Heart left ventricle (tissue), 16 donors: ENCODE measurements at regions of chr1 and their contacts with region 1.

Region 1: DNA sequence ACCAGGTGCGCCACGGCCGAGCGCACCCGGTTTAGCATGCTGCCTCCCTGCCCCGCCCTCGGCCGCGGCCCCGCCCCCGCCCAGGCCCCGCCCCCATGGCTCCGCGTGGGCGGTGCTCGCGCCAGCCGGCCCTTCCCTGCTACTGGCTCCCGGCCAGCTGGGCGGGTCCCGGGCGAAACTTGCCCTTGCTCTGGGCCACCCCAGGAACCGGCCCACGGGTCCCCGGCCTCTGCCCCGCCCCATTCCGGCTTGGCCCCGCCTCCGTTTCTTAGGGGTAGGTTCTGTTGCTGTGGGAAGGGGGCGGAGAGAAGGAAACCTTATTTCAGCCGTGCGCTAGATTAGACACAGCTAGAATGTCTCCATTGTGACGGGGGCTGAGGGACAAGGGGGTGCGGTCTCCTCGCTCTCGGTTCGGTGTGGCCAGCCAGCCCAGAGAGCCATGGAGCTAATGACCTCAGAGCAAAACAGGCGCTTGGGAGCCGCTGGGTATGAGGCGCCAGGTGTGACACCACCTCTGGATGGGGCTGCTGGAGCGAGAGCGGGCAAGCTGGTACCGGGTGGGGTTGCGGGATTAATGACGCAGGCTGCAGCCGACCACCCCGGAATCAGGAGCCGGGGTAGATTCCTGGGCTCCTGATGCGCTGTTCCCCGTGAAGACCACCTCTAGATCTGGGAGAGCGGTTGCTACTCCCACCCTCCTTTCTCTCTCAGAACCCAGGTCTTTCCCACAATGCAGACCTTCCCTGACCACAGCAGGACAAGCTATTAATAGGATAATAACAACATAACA is at the start of gene PPM1J:
- DNase-seq: peak; percentile 98 to 99 (median 99)
- ATAC-seq: peak; percentile 86 to 93 (median 88)
- H3K4me3 ChIP-seq: peak within 1 kb of the TSS; percentile 40 to 93 (median 70)
- H3K27ac ChIP-seq: peak within 1 kb of the TSS in 11 of 12 donors; percentile 31 to 83 (median 71)
- H3K4me1 ChIP-seq: peaks cover 0 to 35% (median 20%) of the 10 kb centered on the region in 12 donors
- H3K27me3 ChIP-seq: peaks cover 0 to 12% (median 0%) of the 10 kb centered on the region in 9 donors
- CTCF ChIP-seq: no peak
- POLR2A ChIP-seq: peak in 1 of 2 donors; percentile 81
- total RNA-seq, gene PPM1J: 4.2 to 11.5 (median 8.3) TPM

Region 2: DNA sequence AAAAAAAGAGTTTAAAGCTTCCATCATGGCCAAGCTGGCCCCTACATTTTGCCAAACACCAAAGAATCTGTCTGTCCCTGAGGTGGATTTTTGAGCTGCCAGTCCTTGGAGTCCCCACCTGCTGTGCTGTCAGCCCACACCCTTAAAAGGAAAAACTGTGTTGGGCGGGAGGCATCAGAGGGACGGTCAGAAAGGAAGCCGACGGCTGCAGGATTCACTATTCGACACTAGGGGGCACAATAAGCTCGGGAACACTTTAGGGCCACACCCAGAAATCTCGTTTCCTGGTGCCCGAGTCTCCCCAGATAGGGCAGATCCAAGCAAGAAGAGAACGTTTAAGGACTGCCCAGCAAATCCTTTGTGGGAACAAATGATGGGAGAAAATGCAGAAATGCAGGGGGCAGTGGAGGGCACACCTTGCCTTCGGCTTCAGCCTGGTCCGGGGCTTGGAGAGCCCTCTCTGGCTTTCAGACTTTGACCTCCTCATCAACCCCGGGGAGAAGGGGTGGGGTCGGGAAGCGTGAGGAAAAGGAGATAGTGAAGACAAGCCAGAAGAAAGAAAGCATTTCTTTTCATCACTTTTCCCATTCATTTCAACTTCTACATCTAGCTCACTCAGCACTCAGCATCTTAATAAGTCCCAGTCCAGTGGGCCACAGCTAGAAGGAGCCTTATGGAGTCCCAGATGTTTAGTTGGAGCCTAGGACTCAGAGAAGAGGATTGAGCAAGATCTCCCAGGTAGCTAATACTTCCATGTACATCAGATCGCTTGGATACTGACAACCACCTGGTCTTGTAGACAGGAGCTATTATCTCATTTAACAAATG is 324.5 kb before region 1 on chr1:
- intact Hi-C with region 1: loop called in 1 of 10 experiments (anchors 5 kb)
- DNase-seq: peak; percentile 86 to 90 (median 89)
- ATAC-seq: peak; percentile 68 to 83 (median 80)
- H3K4me3 ChIP-seq: peak overlapping the region in 11 of 12 donors; percentile 1 to 59 (median 51)
- H3K27ac ChIP-seq: peak overlapping the region; percentile 57 to 96 (median 91)
- H3K4me1 ChIP-seq: peaks cover 0 to 68% (median 29%) of the 10 kb centered on the region in 12 donors
- H3K27me3 ChIP-seq: no peaks in the 10 kb centered on the region
- CTCF ChIP-seq: peak; percentile 86 to 97 (median 94)
- POLR2A ChIP-seq: peak in 1 of 2 donors; percentile 47

Region 3: DNA sequence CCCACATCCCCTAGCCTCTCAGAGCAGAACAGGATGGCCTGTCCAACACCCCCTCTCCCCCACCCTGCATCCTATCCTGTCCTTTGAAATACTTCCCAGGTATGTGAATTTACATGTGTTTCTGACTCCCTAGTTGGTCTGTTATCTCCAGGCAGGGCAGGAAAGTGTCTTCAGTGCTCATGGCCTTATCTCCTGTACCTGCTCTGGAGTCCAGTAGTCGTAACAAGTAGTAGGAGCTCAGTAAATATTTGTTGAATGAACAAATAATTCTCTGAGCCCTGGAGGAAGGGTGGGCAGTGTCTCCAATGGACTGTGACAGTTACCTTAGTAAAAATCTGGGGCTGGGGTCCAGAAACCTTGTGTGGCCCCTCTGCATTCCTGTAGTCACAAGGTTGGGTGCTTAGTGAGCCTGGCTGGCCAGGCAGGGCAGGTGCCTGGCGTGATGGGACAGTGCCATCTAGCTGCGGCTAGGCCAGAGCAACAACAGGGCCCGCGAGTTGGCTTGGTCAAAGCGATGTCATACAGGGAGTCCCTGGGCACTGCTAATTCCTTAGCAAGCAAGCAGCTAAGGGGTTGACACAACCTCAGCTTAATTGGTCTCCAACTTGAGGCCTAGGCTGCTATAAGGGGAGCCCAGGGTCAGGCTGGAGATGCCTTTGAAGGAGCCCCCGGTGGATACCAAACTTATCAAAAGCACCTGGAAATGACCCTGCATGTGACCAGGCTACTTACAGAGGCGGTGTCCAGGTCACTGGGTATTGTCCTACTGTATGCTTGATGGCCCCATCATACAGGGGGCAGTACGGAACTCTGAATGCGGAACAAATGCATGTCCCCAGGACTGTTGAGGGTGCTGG is 88.7 kb after region 1 on chr1:
- intact Hi-C with region 1: loop called (anchors 1 to 2 kb)
- DNase-seq: peak; percentile 60 to 77 (median 65)
- ATAC-seq: peak; percentile 72 to 89 (median 86)
- H3K4me3 ChIP-seq: no peak overlapping the region
- H3K27ac ChIP-seq: no peak overlapping the region
- H3K4me1 ChIP-seq: peaks cover 0 to 8% (median 2%) of the 10 kb centered on the region in 12 donors
- H3K27me3 ChIP-seq: no peaks in the 10 kb centered on the region
- CTCF ChIP-seq: peak; percentile 46 to 78 (median 68)
- POLR2A ChIP-seq: no peak

Region 4: DNA sequence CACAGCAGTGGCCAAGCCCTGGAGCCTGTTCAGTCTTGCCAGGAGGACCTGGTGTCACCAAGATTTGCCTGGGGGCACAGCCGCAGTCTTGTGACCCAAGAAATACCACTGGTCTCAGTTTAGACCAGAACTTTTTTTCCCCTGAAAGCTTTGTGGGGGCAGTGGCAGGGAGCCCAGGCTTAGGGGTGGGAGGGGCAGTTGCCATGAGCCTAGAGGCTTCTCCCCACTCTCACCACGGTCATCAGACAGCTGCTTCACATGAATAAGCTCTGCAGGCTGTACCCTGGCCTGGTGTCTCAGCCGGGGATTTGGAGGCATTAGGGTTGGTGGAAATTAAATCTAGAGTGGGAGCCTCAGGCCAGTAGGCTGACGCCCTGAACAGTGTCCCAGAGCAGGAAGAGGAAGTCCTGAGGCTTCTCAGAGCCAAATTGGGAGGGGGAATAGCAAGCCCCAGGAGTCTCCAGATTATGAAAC is 166.8 kb after region 1 on chr1:
- intact Hi-C with region 1: loop called in 4 of 10 experiments (anchors 2 to 10 kb)
- DNase-seq: peak in 3 of 5 donors; percentile 24 to 36 (median 26)
- ATAC-seq: peak; percentile 39 to 59 (median 46)
- H3K4me3 ChIP-seq: no peak overlapping the region
- H3K27ac ChIP-seq: peak overlapping the region in 9 of 12 donors; percentile 41 to 79 (median 59)
- H3K4me1 ChIP-seq: peaks cover 0 to 18% (median 11%) of the 10 kb centered on the region in 12 donors
- H3K27me3 ChIP-seq: no peaks in the 10 kb centered on the region
- CTCF ChIP-seq: no peak
- POLR2A ChIP-seq: no peak

Region 5: DNA sequence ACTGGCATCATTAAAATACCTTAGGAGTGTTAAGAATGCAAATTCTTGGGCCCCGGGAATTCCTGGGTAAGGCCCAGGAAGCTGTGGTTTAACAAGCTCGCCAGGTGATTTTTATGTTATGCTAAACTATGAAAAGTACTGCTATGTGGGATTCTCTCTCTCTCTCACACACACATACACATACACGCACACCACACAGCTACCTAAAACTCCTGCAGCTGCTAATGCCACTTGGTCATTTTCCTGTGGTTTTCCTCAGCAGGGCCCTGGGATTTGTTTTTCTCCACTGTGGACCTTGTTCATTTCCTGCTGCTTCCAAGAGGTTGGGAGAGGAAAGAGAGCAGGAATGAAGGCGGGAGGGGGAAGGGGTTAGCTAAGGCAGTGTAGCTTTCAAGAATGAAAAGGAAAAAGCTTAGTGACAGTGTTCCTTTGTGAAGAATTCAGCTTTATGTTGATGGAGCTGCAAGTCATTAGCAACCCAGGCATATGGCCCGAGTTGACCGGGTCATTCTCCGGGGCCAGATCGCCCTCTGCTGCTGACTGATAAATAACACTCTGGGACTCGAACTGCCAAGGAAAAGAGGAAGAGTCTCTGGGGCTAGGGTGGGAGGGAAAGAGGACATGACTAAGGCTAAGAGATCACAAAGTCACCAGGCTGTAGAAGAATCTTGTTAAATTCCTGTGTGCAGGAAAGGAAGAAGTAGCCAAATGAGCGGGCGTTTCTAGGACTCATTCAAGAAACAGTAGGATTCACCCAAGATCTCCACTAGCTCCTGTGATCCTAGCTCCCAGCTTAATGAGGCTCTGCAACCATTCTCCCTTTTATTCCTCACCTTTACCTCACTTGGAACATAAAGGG is 327.1 kb after region 1 on chr1:
- intact Hi-C with region 1: loop called in 8 of 10 experiments (anchors 1 to 5 kb)
- DNase-seq: peak; percentile 67 to 82 (median 74)
- ATAC-seq: peak; percentile 86 to 92 (median 92)
- H3K4me3 ChIP-seq: no peak overlapping the region
- H3K27ac ChIP-seq: peak overlapping the region in 1 of 12 donors; percentile 73
- H3K4me1 ChIP-seq: peaks cover 0 to 32% (median 9%) of the 10 kb centered on the region in 12 donors
- H3K27me3 ChIP-seq: no peaks in the 10 kb centered on the region
- CTCF ChIP-seq: peak; percentile 40 to 74 (median 66)
- POLR2A ChIP-seq: no peak

Region 6: DNA sequence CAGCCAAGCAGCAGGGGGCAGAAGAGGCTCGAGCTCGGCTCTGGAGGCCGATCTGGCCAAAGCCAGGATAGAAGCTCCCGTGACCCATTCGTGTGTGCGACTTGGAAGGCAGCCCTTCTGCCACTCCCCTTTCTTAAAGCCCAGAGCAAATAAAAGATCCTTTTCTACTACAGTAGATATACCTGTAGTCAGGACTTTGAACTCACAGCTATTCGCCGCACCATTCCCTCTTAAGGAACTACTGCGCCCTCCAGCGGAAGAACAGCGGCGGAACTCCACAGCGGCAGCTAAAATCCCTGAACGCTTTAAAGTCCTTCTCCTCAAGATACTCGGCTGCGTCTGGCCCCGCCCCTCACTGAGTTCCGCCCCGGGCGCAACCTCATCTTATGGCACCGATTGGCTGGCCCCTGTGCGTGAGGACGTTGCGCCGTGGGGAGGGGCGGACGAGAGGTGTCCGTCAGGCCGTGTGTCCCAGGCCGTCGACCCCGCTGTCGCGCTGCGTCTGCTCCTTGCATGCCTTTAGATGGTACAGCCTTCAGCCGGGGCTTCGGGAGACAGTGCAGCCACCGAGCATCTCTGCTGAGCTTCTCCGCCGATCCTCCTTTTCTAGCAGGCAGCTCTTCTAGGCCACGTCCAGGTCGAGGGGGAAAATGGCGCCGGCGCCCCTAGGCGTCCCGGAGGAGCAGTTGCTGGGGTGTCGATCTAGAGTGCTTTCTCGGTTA is 357.5 kb after region 1 on chr1 and contains the start of gene LRIG2:
- intact Hi-C with region 1: loop called in 8 of 10 experiments (anchors 2 to 10 kb)
- DNase-seq: peak; percentile 98 to 99 (median 98)
- ATAC-seq: peak; percentile 99 to 100 (median 100)
- H3K4me3 ChIP-seq: peak within 1 kb of the TSS; percentile 66 to 89 (median 78)
- H3K27ac ChIP-seq: peak within 1 kb of the TSS; percentile 87 to 96 (median 92)
- H3K4me1 ChIP-seq: peaks cover 4 to 40% (median 26%) of the 10 kb centered on the region in 12 donors
- H3K27me3 ChIP-seq: no peaks in the 10 kb centered on the region
- CTCF ChIP-seq: peak; percentile 82 to 96 (median 86)
- POLR2A ChIP-seq: peak; percentile 71 to 85
- total RNA-seq, gene LRIG2: 5.9 to 13.1 (median 8.6) TPM

Region 7: DNA sequence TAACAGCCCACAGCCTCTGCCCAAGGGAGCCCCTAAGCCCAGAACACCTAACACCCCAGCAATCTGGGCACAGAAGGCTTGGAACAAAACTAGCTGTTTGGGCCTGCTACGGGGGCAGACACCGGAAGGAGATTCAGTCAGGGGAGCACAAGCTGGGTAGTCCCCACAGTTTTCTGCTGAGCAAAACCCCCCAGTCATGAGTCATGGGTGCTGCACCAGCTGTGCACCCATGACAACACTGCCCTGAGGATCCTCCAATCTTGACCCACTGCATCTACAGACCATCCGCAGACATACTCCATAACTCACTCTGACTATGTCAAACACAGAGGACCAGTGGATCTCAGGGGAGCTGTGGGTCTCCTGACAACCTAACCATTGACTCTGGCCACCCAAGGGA is 462.6 kb after region 1 on chr1:
- intact Hi-C with region 1: no loop called
- DNase-seq: no peak
- ATAC-seq: no peak
- H3K4me3 ChIP-seq: no peak overlapping the region
- H3K27ac ChIP-seq: no peak overlapping the region
- H3K4me1 ChIP-seq: no peaks in the 10 kb centered on the region
- H3K27me3 ChIP-seq: no peaks in the 10 kb centered on the region
- CTCF ChIP-seq: no peak
- POLR2A ChIP-seq: no peak

Region 8: GRCh38 chr1:113677250-113678158 is 962.0 kb after region 1 on chr1:
- intact Hi-C with region 1: loop called in 4 of 10 experiments (anchors 5 to 10 kb)
- DNase-seq: peak in 3 of 5 donors; percentile 16 to 39 (median 22)
- ATAC-seq: peak in 3 of 4 donors; percentile 42 to 75 (median 74)
- H3K4me3 ChIP-seq: no peak overlapping the region
- H3K27ac ChIP-seq: no peak overlapping the region
- H3K4me1 ChIP-seq: peaks cover 0 to 11% (median 7%) of the 10 kb centered on the region in 12 donors
- H3K27me3 ChIP-seq: no peaks in the 10 kb centered on the region
- CTCF ChIP-seq: peak; percentile 46 to 73 (median 64)
- POLR2A ChIP-seq: no peak